Activated CD4-positive, alpha-beta memory T cell treated with anti-CD3 and anti-CD28 coated beads for 36 hours (primary cell): ENCODE measurements at regions of chr11 and their contacts with region 1.

Region 1: GRCh38 chr11:124865921-124866583 is 820 bp downstream of the ROBO3 start:
- DNase-seq: peak; percentile 68
- H3K4me3 Mint-ChIP-seq: no peak overlapping the region
- H3K27ac Mint-ChIP-seq: no peak overlapping the region
- H3K4me1 Mint-ChIP-seq: peaks cover 36% of the 10 kb centered on the region
- H3K27me3 Mint-ChIP-seq: peaks cover 77% of the 10 kb centered on the region

Region 2: GRCh38 chr11:124778281-124778680 is 87.8 kb before region 1 on chr11:
- CTCF ChIA-PET with region 1: no interaction called
- POLR2A ChIA-PET with region 1: no interaction called
- intact Hi-C with region 1: no loop called
- DNase-seq: no peak
- H3K4me3 Mint-ChIP-seq: no peak overlapping the region
- H3K27ac Mint-ChIP-seq: no peak overlapping the region
- H3K4me1 Mint-ChIP-seq: peaks cover 10% of the 10 kb centered on the region
- H3K27me3 Mint-ChIP-seq: no peaks in the 10 kb centered on the region

Region 3: GRCh38 chr11:124855437-124855836 is 10.6 kb before region 1 on chr11:
- CTCF ChIA-PET with region 1: interaction called, 10 read pairs
- POLR2A ChIA-PET with region 1: no interaction called
- intact Hi-C with region 1: no loop called
- DNase-seq: no peak
- H3K4me3 Mint-ChIP-seq: no peak overlapping the region
- H3K27ac Mint-ChIP-seq: no peak overlapping the region
- H3K4me1 Mint-ChIP-seq: no peaks in the 10 kb centered on the region
- H3K27me3 Mint-ChIP-seq: peaks cover 9% of the 10 kb centered on the region

Region 4: DNA sequence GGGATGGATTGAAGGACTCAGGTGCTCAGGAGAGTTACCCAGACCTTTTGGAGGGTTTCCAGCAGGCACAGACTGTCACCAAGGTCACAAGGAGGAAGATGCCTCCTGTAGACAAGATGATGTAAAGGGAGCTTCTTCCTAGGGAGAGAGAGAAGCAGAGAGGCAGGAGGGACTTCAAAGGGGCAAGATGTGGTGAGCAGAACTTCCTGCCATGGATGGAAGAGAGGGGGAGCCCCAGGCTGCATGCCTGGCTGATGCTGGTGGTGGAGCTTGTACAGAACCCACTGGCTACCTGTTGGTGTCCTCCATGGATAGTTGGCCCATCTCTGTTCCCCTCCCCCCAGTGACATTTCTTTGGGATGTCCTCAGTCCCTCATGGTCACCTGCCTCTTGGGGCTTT is 57.2 kb after region 1 on chr11:
- CTCF ChIA-PET with region 1: no interaction called
- POLR2A ChIA-PET with region 1: no interaction called
- intact Hi-C with region 1: no loop called
- DNase-seq: no peak
- H3K4me3 Mint-ChIP-seq: no peak overlapping the region
- H3K27ac Mint-ChIP-seq: no peak overlapping the region
- H3K4me1 Mint-ChIP-seq: peaks cover 11% of the 10 kb centered on the region
- H3K27me3 Mint-ChIP-seq: no peaks in the 10 kb centered on the region